ENCODE measurements at regions of chr9 and their contacts with region 1.

Region 1: GRCh38 chr9:110256380-110257096 is at the start of gene TXN:
- DNase-seq: peak; percentile 76 to 81 (median 81)
- H3K4me3 ChIP-seq: peak within 1 kb of the TSS; percentile 64 to 90
- H3K4me3 Mint-ChIP-seq: peak within 1 kb of the TSS; percentile 94 to 99 (median 97)
- H3K27ac ChIP-seq: peak within 1 kb of the TSS; percentile 69
- H3K27ac Mint-ChIP-seq: peak within 1 kb of the TSS; percentile 90 to 99 (median 96)
- H3K4me1 ChIP-seq: peaks cover 40% of the 10 kb centered on the region
- H3K4me1 Mint-ChIP-seq: peaks cover 26 to 47% (median 37%) of the 10 kb centered on the region in 4 donors
- H3K27me3 ChIP-seq: no peaks in the 10 kb centered on the region
- H3K27me3 Mint-ChIP-seq: no peaks in the 10 kb centered on the region
- total RNA-seq, gene TXN: 45.6 to 47.9 TPM

Region 2: DNA sequence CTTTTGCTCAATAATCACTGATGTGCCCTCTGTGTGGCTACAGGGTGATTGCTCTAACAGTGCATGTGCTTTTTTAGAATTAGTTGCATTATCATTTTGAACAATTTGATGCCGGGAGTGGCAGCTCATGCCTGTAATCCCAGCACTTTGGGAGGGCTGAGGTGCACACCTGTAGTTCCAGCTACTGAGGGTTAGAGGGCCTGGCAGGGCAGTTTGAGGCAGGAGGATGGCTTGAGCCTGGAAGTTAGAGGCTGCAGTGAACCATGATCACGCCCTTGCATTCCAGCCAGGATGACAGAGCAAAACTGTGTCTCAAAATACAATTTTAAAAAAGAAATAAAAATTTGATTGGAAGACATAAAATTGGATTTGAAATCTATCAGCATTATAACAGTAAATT is 27.6 kb before region 1 on chr9:
- CTCF ChIA-PET with region 1: no interaction called
- POLR2A ChIA-PET with region 1: no interaction called
- intact Hi-C with region 1: no loop called
- DNase-seq: no peak
- H3K4me3 ChIP-seq: no peak overlapping the region
- H3K4me3 Mint-ChIP-seq: no peak overlapping the region
- H3K27ac ChIP-seq: no peak overlapping the region
- H3K27ac Mint-ChIP-seq: no peak overlapping the region
- H3K4me1 ChIP-seq: no peaks in the 10 kb centered on the region
- H3K4me1 Mint-ChIP-seq: no peaks in the 10 kb centered on the region
- H3K27me3 ChIP-seq: no peaks in the 10 kb centered on the region
- H3K27me3 Mint-ChIP-seq: no peaks in the 10 kb centered on the region

Region 3: DNA sequence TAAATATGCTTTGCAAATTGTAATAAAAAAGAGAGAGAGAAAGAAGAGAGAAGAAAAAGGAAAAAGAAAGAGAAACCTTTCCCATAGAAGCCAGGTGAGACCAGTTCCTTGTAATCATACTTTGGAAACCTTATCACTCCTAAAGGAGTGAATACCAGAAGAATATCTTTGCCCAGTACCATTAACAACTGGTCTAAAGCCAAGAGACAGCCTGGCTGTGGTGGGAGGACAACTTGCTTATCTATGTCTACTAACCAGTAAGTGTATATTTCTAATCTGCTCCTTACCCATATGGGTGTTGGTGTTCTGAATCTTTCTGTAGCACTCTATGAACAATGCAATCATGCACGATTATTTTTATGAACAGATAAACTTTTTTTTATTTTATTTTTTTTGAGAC is 10.3 kb after region 1 on chr9:
- CTCF ChIA-PET with region 1: interaction called, 3 read pairs
- POLR2A ChIA-PET with region 1: no interaction called
- intact Hi-C with region 1: loop called (anchors 1 kb)
- DNase-seq: no peak
- H3K4me3 ChIP-seq: no peak overlapping the region
- H3K4me3 Mint-ChIP-seq: no peak overlapping the region
- H3K27ac ChIP-seq: no peak overlapping the region
- H3K27ac Mint-ChIP-seq: no peak overlapping the region
- H3K4me1 ChIP-seq: no peaks in the 10 kb centered on the region
- H3K4me1 Mint-ChIP-seq: no peaks in the 10 kb centered on the region
- H3K27me3 ChIP-seq: no peaks in the 10 kb centered on the region
- H3K27me3 Mint-ChIP-seq: no peaks in the 10 kb centered on the region

Region 4: DNA sequence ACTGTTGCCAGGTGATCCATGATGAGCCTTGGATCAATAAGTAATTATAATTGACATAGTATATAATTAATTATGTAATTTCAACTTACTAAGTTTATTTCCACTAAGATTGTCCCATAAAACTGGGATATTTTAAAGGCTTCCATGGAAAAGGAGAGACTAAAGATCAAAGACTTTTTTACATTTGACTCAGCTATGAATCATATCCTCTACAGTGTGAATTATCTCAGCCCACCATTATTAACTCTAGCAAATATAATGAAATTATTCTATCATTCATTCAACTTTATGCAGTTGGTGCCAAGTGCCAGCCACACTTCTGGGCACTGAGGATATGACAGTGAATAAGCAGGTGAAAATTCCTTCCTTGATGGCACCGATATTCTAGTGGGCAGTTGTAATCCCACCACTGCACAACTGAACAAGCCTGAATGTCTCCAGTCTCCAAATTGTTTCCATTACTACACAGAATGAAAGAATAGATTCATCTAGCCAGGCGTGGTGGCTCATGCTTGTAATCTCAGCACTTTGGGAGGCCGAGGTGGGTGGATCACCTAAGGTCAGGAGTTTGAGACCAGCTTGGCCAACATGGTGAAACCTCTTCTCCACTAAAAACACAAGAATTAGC is 21.7 kb after region 1 on chr9:
- CTCF ChIA-PET with region 1: no interaction called
- POLR2A ChIA-PET with region 1: no interaction called
- intact Hi-C with region 1: loop called (anchors 2 kb)
- DNase-seq: no peak
- H3K4me3 ChIP-seq: no peak overlapping the region
- H3K4me3 Mint-ChIP-seq: no peak overlapping the region
- H3K27ac ChIP-seq: no peak overlapping the region
- H3K27ac Mint-ChIP-seq: no peak overlapping the region
- H3K4me1 ChIP-seq: no peaks in the 10 kb centered on the region
- H3K4me1 Mint-ChIP-seq: no peaks in the 10 kb centered on the region
- H3K27me3 ChIP-seq: no peaks in the 10 kb centered on the region
- H3K27me3 Mint-ChIP-seq: peaks cover 7 to 10% of the 10 kb centered on the region in 2 donors